PC-9 (cell line): ENCODE measurements at regions of chr2 and their contacts with region 1.

Region 1: DNA sequence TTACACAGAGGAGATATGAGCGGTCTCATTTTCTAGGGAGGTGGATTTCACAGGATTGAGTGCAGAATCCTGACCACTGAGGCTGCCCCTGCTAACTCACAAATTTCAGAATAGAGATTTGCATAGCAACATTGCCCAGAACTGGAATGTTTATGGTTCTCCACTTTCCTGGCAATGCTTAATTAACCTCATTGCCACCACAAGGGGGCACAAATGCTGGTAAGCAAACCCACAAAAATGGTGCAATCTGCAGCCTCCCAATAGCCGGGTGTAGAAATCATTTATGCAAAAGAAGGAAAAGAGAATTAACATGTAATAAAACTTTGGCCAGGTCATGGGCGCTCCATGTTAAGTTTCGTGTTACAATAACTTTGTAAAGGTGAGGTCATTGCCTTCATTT is 112.4 kb downstream of the CYRIA start:
- DNase-seq: peak; percentile 8 to 41
- H3K4me3 ChIP-seq: no peak overlapping the region
- H3K27ac ChIP-seq: no peak overlapping the region
- H3K4me1 ChIP-seq: no peaks in the 10 kb centered on the region
- H3K27me3 ChIP-seq: no peaks in the 10 kb centered on the region
- CTCF ChIP-seq: peak; percentile 81

Region 2: GRCh38 chr2:16126517-16127275 is 426.5 kb before region 1 on chr2:
- CTCF ChIA-PET with region 1: no interaction called
- POLR2A ChIA-PET with region 1: no interaction called
- intact Hi-C with region 1: no loop called
- DNase-seq: no peak
- H3K4me3 ChIP-seq: no peak overlapping the region
- H3K27ac ChIP-seq: no peak overlapping the region
- H3K4me1 ChIP-seq: no peaks in the 10 kb centered on the region
- H3K27me3 ChIP-seq: peaks cover 64% of the 10 kb centered on the region
- CTCF ChIP-seq: no peak

Region 3: GRCh38 chr2:16756831-16757644 is 203.8 kb after region 1 on chr2:
- CTCF ChIA-PET with region 1: no interaction called
- POLR2A ChIA-PET with region 1: no interaction called
- intact Hi-C with region 1: loop called (anchors 1 kb)
- DNase-seq: peak; percentile 49 to 63
- H3K4me3 ChIP-seq: no peak overlapping the region
- H3K27ac ChIP-seq: no peak overlapping the region
- H3K4me1 ChIP-seq: no peaks in the 10 kb centered on the region
- H3K27me3 ChIP-seq: no peaks in the 10 kb centered on the region
- CTCF ChIP-seq: peak; percentile 97